ENCODE measurements at regions of chr20 and their contacts with region 1.

Region 1: GRCh38 chr20:62010551-62011402 is 54.9 kb downstream of the TAF4 start:
- DNase-seq: peak; percentile 80
- CTCF ChIP-seq: peak; percentile 67

Region 2: GRCh38 chr20:61874501-61875026 is 136.2 kb before region 1 on chr20:
- CTCF ChIA-PET with region 1: no interaction called
- POLR2A ChIA-PET with region 1: no interaction called
- DNase-seq: no peak
- CTCF ChIP-seq: no peak

Region 3: DNA sequence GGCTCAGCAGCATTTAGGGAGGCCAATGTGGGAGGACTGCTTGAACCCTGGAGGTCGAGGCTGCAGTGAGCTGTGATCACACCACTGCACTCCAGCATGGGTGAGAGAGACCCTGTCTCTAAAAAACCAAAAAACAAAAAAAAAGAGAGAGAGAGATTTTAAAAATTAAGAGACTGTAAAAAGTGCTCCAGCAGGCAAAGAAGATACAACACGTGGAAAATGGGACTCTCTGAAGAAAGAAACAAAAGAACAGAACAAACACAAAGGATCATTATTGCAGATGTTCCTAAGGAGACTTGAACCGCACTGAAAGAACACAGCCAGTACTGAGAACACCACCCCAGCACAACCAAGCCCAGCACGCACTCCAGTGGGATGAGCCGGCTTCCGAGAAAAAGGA is 19.3 kb before region 1 on chr20:
- CTCF ChIA-PET with region 1: no interaction called
- POLR2A ChIA-PET with region 1: no interaction called
- DNase-seq: no peak
- CTCF ChIP-seq: no peak

Region 4: GRCh38 chr20:62136283-62137091 is 125.7 kb after region 1 on chr20:
- CTCF ChIA-PET with region 1: interaction called, 57 read pairs
- POLR2A ChIA-PET with region 1: no interaction called
- DNase-seq: peak; percentile 64
- CTCF ChIP-seq: peak; percentile 94

Region 5: DNA sequence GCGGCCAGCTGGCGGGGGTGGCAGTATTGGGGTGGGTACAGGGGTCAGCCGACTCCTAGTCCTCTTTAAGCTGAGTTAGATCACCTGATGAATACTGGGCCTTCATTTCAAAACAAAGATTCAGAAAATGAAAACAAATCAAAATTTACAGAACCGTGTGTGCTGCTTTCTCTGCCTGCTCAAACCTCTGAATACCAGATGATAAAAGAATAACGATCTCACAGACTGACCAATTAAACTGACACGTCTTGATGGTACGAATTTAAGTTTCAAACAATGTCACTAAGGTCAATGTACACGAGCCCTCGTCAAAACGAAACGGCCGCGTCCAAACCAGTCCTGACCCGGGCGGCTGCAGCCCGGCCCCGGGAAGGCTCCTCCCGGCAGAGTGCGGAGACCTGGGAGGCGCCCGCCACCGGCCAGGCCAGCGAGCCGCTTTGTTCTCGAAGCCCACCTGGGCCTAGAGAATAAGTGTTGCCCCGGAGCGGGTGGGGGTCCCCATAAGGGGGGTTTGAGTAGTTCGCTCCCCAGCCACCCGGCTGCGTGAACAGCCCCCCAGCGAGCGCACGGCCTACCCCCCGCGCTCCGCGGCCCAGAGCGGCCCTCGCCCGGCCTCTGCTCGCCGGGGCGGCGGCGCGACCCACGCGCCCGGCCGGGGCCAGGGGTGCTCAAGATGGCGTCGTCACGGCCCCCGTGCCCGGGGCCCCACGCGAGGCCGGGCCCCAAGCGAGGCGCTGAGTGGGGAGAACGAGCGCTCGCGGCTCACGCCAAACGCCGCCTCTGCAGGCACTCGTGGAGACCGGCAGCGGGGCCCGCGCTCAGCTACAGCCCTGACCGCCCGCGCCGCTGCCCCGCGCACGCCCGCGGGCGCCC is 131.7 kb after region 1 on chr20:
- CTCF ChIA-PET with region 1: interaction called, 57 read pairs
- POLR2A ChIA-PET with region 1: no interaction called
- DNase-seq: no peak
- CTCF ChIP-seq: no peak

Region 6: GRCh38 chr20:62156592-62157386 is 146.0 kb after region 1 on chr20:
- CTCF ChIA-PET with region 1: interaction called, 13 read pairs
- POLR2A ChIA-PET with region 1: no interaction called
- DNase-seq: peak; percentile 84
- CTCF ChIP-seq: peak; percentile 64

Measured in GM10248 (cell line).